ENCODE measurements at regions of chrX and their contacts with region 1.

Region 1: DNA sequence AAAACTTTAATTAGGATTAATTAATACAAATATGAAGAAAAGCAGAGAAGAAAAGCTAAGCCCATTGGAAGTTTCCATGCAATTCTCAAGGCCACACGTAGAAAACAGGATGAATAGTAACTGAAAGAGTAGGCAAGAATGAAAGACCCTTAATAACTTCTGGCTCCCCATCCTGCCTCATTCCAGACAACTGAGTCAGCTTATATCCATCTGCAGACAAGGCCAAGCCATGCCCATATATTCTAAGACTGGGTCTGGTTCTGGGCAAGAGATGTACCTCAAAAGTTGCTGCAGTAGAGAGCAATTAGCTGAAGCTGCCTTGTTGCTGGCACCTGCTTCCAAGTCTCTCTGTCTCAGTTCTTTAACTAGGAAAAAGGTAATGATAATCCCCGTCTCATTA is 244.1 kb downstream of the GPC3 start:
- DNase-seq: no peak
- H3K4me3 Mint-ChIP-seq: no peak overlapping the region
- H3K27ac Mint-ChIP-seq: no peak overlapping the region
- H3K4me1 Mint-ChIP-seq: peaks cover 38% of the 10 kb centered on the region
- H3K27me3 Mint-ChIP-seq: no peaks in the 10 kb centered on the region
- CTCF ChIP-seq: no peak

Region 2: GRCh38 chrX:133709486-133709885 is 31.8 kb before region 1 on chrX:
- CTCF ChIA-PET with region 1: no interaction called
- intact Hi-C with region 1: loop called (anchors 2 kb)
- DNase-seq: no peak
- H3K4me3 Mint-ChIP-seq: no peak overlapping the region
- H3K27ac Mint-ChIP-seq: peak overlapping the region; percentile 62
- H3K4me1 Mint-ChIP-seq: peaks cover 48% of the 10 kb centered on the region
- H3K27me3 Mint-ChIP-seq: no peaks in the 10 kb centered on the region
- CTCF ChIP-seq: no peak